Gastrocnemius medialis (tissue), 4 donors: ENCODE measurements at regions of chr20 and their contacts with region 1.

Region 1: GRCh38 chr20:41617931-41618806 is at the start of gene CHD6:
- DNase-seq: peak; percentile 99
- ATAC-seq: peak; percentile 98
- H3K4me3 ChIP-seq: peak within 1 kb of the TSS; percentile 70 to 86 (median 81)
- H3K27ac ChIP-seq: peak within 1 kb of the TSS; percentile 65 to 93 (median 86)
- H3K4me1 ChIP-seq: peaks cover 33 to 38% of the 10 kb centered on the region in 2 donors
- H3K27me3 ChIP-seq: no peaks in the 10 kb centered on the region
- CTCF ChIP-seq: no peak
- POLR2A ChIP-seq: peak in 1 of 2 donors; percentile 45
- total RNA-seq, gene CHD6: 12.8 to 33.7 (median 19.2) TPM

Region 2: DNA sequence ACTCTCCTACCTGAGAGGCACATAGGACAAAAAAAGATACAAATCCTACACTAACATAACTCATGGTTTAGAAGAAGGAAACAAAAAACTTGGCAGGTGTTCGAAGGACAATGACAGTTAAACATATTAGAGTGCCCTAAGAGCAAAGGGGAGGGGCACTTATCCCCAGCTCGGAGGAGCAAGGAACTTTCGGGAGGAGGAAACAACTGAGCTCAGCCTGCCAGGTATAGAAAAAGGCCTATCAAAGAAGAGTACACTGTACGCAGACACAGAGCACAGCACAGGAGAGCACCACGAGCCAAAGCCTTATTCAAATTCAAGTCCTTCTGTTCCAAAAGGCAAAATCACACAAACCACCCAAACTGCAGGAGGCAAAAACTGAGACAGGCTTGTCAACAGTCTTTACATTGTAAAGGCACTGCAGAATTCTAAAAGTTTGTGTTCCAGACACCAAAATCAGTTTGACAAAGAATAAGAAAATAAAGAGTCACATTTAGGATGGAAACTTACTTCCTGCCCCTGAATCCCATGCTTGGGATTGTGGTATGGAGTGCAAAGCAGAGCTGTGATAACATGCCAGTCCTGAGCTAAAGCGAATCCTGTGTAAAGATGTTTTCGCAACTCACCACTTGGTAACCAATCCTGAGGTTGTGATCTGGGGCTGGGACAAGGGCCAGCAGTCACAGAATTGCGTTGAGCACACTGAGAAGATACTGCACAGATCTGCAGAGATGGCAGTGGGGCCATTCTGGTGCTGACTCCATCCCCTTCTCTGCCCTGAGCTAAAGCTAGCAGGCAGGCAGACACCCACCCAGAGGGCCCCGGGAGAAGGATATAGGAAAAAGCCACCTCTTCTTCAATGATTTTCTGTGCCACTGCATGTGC is 108.6 kb before region 1 on chr20:
- in situ Hi-C with region 1: loop called in 1 of 4 experiments (anchors 25 kb)
- intact Hi-C with region 1: loop called (anchors 5 kb)
- DNase-seq: peak; percentile 73 to 80
- ATAC-seq: peak; percentile 97 to 99
- H3K4me3 ChIP-seq: no peak overlapping the region
- H3K27ac ChIP-seq: peak overlapping the region; percentile 27 to 66 (median 58)
- H3K4me1 ChIP-seq: peaks cover 48 to 55% of the 10 kb centered on the region in 2 donors
- H3K27me3 ChIP-seq: no peaks in the 10 kb centered on the region
- CTCF ChIP-seq: no peak
- POLR2A ChIP-seq: no peak

Region 3: DNA sequence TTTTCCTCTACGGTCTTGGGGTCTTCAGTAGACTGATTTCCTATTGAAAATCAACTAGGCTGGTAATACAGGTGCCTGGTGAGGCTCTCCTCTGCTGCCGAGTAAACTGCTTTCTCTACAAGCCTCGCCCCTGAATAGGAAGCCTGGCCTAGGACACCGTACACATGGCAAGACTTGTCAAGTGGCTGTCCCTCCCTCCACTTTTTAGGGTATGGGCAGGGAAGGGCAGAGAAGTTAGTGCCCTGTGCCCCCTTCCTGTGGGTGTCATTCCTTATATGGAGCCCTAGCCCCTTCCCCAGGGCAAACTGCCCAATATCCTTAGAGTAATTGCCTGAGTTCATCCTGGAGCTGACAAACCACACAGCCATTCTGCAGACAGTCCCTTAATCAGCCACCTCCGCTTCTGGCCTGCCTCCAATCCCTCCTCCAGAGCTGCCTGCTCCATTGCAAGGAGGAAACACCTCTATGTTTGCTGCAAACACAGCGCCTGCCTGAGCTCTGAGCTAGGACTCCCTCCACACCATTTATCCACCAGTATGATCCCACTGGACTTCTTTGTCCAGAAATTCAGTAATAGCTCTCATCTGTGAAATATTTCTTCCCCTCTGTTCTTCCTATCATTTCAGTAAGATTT is 93.1 kb before region 1 on chr20:
- in situ Hi-C with region 1: loop called in 1 of 4 experiments (anchors 25 kb)
- intact Hi-C with region 1: no loop called
- DNase-seq: peak in 1 of 2 donors; percentile 27
- ATAC-seq: peak in 1 of 2 donors; percentile 41
- H3K4me3 ChIP-seq: no peak overlapping the region
- H3K27ac ChIP-seq: no peak overlapping the region
- H3K4me1 ChIP-seq: peaks cover 7 to 22% of the 10 kb centered on the region in 2 donors
- H3K27me3 ChIP-seq: no peaks in the 10 kb centered on the region
- CTCF ChIP-seq: no peak
- POLR2A ChIP-seq: no peak

Region 4: GRCh38 chr20:41570557-41570956 is 47.6 kb before region 1 on chr20:
- in situ Hi-C with region 1: no loop called
- intact Hi-C with region 1: no loop called
- DNase-seq: no peak
- ATAC-seq: no peak
- H3K4me3 ChIP-seq: no peak overlapping the region
- H3K27ac ChIP-seq: no peak overlapping the region
- H3K4me1 ChIP-seq: peaks cover 73 to 76% of the 10 kb centered on the region in 2 donors
- H3K27me3 ChIP-seq: no peaks in the 10 kb centered on the region
- CTCF ChIP-seq: no peak
- POLR2A ChIP-seq: no peak